Activated naive CD4-positive, alpha-beta T cell treated with anti-CD3 and anti-CD28 coated beads, Interleukin-2, amount 10 ng/mL, durations not matched to agents 7 days and 5 days (primary cell): ENCODE measurements at regions of chr11 and their contacts with region 1.

Region 1: GRCh38 chr11:8202516-8203413 is 33.9 kb upstream of the RIC3 start:
- DNase-seq: no peak
- H3K4me3 Mint-ChIP-seq: no peak overlapping the region
- H3K27ac Mint-ChIP-seq: no peak overlapping the region
- H3K4me1 Mint-ChIP-seq: no peaks in the 10 kb centered on the region
- H3K27me3 Mint-ChIP-seq: peaks cover 58% of the 10 kb centered on the region

Region 2: DNA sequence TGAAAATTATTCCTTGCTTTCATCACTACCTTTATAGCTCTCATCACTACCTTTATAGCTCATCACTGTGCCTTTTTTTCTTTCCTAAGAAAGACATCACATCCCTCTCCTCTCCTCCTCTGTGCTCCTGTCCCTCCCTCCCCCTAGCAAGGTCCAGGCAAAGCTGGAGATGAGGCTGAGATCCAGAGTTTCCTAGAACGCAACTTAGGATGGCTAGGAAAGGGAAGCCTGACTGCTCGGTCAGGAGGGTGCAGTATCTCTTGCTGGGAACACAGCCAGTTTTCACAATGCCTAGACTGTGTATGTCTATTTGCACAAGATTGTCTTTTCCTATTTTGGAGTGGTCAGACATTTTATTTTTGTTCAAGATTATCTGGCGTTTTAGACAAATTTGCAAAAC is 97.1 kb before region 1 on chr11:
- CTCF ChIA-PET with region 1: no interaction called
- DNase-seq: no peak
- H3K4me3 Mint-ChIP-seq: no peak overlapping the region
- H3K27ac Mint-ChIP-seq: no peak overlapping the region
- H3K4me1 Mint-ChIP-seq: no peaks in the 10 kb centered on the region
- H3K27me3 Mint-ChIP-seq: no peaks in the 10 kb centered on the region

Region 3: DNA sequence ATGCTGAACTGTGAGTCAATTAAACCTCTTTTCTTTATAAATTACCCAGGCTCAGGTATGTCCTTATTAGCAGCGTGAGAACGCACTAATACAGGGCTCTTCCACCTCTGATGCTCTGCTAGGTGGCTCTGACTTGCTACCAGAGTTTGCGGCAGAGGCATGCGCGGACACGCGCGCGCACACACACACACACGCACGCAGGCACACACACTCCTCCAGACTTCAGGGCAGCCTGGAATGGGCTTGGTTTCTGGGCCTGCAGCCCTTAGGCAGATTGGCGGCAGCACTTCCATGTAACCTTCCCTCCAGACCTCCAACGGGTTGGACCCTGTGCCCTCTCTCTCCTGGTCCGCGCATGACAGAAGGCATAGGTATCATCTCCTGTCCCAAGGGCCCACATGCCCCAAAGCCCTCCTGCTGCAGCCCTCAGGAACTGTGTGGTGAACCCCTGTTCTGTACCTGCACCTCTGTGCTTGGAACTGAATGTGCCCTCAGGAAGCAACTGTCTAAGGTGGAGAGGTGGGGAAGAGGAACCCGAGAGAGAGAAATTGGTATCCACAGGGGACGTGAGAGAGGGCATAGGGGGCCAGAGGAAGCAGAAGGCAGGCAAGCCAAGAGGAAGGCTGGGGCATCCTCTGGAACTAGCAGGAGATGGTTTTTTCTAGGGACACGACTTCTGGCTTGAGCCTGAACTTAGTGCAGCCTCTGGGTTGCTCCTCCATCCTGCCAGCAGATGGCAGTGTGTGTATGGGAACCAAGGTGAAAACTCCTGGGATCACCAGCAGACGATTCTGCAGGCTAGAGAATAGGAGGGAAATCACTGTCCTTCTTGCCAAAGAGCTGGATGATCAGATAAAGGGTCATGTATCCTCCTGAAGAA is 10.5 kb before region 1 on chr11:
- CTCF ChIA-PET with region 1: interaction called, 13 read pairs
- DNase-seq: peak; percentile 58
- H3K4me3 Mint-ChIP-seq: no peak overlapping the region
- H3K27ac Mint-ChIP-seq: no peak overlapping the region
- H3K4me1 Mint-ChIP-seq: no peaks in the 10 kb centered on the region
- H3K27me3 Mint-ChIP-seq: peaks cover 26% of the 10 kb centered on the region

Region 4: DNA sequence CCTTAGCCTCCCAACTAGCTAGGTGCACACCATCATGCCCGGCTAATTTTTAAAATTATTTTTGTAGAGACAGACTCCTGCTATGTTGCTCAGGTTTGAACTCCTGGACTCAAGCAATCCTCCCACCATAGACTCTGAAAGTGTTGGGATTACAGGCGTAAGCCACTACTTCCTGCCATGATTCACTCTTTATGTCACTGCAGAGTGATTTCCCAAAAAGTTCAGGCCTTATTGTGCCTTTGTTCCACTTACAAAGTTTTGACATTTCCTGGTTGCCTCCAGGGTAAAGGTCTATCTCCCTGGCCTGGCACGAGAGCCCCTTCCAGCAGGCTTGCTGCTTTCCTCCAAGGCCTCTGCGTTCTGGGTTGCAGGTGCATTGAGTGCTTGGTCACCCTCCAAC is 10.6 kb after region 1 on chr11:
- CTCF ChIA-PET with region 1: no interaction called
- DNase-seq: no peak
- H3K4me3 Mint-ChIP-seq: no peak overlapping the region
- H3K27ac Mint-ChIP-seq: no peak overlapping the region
- H3K4me1 Mint-ChIP-seq: no peaks in the 10 kb centered on the region
- H3K27me3 Mint-ChIP-seq: peaks cover 10% of the 10 kb centered on the region

Region 5: GRCh38 chr11:8225589-8226036 is 22.8 kb after region 1 on chr11:
- CTCF ChIA-PET with region 1: no interaction called
- DNase-seq: peak; percentile 76
- H3K4me3 Mint-ChIP-seq: no peak overlapping the region
- H3K27ac Mint-ChIP-seq: no peak overlapping the region
- H3K4me1 Mint-ChIP-seq: no peaks in the 10 kb centered on the region
- H3K27me3 Mint-ChIP-seq: peaks cover 2% of the 10 kb centered on the region